Activated T-helper 1 cell treated with anti-CD3 and anti-CD28 coated beads, Interleukin-12 subunit alpha, Interleukin-12 subunit beta, Interleukin-2, Interleukin-4 antibody, amounts not matched to agents 30 ng/mL and 10 ng/mL and 1 ng/mL, durations not matched to agents 14 hours and 24 hours and 36 hours (primary cell): ENCODE measurements at regions of chr1 and their contacts with region 1.

Region 1: DNA sequence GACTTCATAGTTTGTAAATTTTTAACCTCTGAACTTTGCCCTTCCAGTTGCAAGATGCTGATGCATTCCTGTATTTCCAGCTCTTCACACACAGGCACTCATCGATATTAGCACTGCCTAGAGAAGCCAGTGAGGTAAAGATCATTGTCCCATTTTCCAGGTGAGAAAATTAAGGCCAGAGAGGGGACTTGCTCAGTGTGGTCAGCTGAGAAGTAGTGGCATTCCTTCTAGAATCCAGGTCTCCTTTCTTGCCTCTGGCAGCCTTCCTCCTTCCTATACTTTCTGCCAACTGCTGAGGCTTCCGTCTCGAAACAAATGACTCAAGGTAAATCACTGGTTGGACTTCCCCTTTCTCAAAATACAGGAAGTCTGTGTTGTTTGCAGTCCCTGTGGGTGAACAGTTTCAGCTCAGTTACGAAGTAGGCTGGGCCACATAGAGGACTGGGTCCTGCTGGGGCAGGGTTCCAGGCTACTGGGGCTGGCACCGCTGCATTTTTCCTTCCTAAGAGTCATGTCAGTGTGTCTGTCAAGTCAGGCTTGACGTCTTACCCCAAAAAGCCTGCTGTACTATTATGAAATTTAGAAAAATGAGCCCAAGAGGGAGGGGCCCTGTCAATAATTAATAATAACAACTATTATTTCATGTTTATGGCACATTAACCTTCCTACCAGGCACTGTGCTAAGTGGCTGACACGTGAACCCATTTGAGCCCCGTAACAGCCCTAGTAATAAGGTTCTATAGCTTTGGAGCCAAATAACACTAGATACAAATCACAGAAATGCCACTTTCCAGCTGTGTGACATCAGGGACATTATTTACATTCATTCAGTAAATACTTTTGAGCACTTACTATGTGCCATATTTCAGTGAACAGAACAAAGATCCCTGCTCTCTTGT is 16.6 kb upstream of the RNF19B start:
- DNase-seq: peak; percentile 65
- H3K4me3 Mint-ChIP-seq: peak overlapping the region; percentile 60
- H3K27ac Mint-ChIP-seq: peak overlapping the region; percentile 85
- H3K4me1 Mint-ChIP-seq: peaks cover 81% of the 10 kb centered on the region
- H3K27me3 Mint-ChIP-seq: no peaks in the 10 kb centered on the region

Region 2: GRCh38 chr1:32798679-32799416 is 182.4 kb before region 1 on chr1:
- intact Hi-C with region 1: loop called (anchors 5 kb)
- DNase-seq: peak; percentile 49
- H3K4me3 Mint-ChIP-seq: peak overlapping the region; percentile 68
- H3K27ac Mint-ChIP-seq: peak overlapping the region; percentile 96
- H3K4me1 Mint-ChIP-seq: peaks cover 47% of the 10 kb centered on the region
- H3K27me3 Mint-ChIP-seq: no peaks in the 10 kb centered on the region

Region 3: DNA sequence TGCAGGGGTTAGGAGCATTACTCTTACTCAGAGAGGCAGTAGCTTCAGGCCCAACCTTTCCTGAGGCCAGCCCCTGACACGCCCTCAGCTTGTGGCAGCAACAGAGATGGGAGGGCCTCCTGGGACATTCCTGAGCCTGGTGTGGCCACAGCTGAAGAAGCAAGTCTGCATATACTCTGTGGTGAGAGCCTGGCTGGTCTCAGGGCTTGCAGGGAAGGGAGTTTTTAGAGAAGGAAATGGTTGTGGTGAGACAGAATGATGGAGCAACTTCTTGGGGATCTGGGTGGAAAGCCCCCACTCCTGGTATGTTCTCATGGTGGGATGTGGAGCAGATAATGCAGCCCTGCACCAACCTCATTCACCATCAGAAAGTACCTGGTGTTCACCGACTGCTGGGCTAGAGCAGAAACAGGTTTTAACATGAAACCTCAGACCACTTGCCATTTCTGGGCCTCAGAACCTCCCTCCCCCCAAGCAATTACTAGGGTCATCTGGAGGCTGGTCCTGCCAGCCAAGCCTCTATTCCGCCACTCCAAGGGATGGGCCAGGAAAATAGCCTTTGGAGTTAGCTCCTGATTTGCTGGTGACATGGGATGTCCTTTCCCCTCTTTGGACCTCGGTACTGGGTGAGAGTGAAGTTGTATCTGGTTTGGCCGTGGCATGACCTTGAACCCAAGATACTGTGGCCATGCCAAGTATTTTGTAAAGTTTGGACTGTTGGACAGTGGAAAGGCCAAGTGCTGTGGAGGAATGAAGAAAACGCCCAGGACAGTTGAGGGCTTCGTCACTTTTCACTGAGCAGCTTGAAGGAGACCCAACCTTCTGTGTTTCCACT is 11.5 kb after region 1 on chr1:
- intact Hi-C with region 1: loop called (anchors 1 kb)
- DNase-seq: peak; percentile 81
- H3K4me3 Mint-ChIP-seq: peak overlapping the region; percentile 31
- H3K27ac Mint-ChIP-seq: peak overlapping the region; percentile 87
- H3K4me1 Mint-ChIP-seq: peaks cover 83% of the 10 kb centered on the region
- H3K27me3 Mint-ChIP-seq: no peaks in the 10 kb centered on the region

Region 4: DNA sequence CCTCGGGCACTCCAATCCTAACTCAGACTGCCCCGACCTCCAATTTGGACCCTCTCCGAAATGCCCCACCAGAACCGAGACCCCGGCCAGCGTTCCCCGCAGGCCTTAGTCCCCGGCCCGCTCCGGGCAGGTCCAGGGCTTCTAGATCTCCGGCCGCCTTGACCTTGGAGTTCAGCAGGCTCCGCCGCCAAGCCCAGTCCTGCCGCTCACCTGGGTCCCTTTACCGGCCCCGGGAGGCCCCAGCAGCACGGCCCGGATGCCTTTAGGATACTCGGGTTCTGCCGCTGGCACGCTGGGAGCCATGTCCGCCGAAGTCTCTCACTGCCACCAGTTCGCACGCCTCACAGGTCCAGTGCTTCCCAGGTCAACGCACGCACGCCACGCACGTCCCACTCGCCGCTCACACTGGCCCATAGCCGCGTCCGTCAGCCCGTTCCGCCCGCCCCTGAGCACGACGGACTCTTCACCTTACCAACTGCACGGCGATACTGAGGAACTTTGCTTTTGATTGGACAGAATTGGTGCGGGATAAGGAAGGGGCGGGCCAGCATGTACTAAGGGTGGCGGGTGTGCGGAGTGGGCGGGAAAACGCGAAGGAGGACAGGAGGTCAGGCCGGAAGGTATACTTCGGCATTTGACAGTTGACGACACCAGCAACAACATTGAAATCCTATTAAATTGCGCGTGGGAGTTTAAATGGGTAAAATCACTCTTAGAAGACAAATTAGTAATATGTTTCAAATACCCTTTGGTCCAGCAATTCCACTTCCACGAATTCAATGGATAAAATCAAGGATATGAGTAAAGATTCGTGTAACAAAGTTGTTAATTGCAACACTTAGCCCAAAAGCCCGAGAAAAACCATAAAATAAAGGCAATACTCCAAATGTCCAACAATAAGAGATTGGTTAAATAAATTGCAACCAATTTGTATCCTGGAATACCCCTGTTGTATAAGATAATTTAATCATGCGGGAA is 55.6 kb after region 1 on chr1 and contains the start of gene AK2:
- intact Hi-C with region 1: loop called (anchors 2 kb)
- DNase-seq: peak; percentile 91
- H3K4me3 Mint-ChIP-seq: peak within 1 kb of the TSS; percentile 91
- H3K27ac Mint-ChIP-seq: peak within 1 kb of the TSS; percentile 90
- H3K4me1 Mint-ChIP-seq: peaks cover 48% of the 10 kb centered on the region
- H3K27me3 Mint-ChIP-seq: no peaks in the 10 kb centered on the region
- total RNA-seq, gene AK2: 387 and 400 TPM in 2 replicates